ENCODE measurements at regions of chr2 and their contacts with region 1.

Region 1: DNA sequence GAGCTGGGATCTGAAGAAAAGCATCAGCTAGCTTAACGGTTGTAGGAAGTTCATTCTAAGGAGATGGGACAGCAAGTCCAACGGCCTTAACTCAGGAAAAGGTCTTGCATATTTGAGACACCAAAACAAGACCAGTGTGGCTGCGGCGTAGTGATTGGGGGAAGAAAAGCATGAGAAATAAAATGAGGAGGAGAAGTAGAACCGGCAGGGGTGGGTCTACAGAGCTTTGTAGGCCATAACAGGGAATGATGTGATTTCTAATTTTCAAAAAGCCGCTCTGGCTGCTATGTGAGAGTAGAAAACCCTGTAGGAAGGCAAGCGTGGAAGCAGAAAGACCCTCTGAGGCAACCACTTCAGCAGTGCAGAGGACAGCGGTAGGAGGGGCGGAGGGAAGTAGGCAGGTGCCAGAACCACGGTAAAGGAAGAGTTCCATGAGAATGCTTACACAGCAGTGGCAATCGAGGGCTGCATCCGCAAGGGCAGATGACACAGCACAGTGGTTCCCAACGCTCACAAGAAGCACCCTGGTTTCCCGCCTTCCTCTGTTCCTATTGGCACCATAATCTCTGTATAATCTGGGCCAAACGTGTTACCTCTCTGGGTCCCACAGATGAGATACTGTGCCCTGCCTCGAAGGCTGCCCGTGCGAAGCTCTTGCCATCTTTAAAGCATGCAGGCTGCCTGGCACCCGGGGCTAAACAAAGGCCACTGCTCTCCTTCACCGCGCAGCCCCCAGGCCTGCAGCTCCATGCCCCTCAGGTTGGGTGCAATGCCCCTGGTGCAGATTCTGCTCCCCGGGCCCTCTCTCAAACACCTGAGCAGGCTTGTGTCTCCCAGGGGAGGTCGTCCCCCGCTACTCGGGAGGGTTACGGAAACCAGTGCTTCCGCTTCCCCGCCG is 791 bp downstream of the ANKRD39 start:
- DNase-seq: no peak
- H3K4me3 ChIP-seq: peak overlapping the region; percentile 80
- CTCF ChIP-seq: no peak

Region 2: DNA sequence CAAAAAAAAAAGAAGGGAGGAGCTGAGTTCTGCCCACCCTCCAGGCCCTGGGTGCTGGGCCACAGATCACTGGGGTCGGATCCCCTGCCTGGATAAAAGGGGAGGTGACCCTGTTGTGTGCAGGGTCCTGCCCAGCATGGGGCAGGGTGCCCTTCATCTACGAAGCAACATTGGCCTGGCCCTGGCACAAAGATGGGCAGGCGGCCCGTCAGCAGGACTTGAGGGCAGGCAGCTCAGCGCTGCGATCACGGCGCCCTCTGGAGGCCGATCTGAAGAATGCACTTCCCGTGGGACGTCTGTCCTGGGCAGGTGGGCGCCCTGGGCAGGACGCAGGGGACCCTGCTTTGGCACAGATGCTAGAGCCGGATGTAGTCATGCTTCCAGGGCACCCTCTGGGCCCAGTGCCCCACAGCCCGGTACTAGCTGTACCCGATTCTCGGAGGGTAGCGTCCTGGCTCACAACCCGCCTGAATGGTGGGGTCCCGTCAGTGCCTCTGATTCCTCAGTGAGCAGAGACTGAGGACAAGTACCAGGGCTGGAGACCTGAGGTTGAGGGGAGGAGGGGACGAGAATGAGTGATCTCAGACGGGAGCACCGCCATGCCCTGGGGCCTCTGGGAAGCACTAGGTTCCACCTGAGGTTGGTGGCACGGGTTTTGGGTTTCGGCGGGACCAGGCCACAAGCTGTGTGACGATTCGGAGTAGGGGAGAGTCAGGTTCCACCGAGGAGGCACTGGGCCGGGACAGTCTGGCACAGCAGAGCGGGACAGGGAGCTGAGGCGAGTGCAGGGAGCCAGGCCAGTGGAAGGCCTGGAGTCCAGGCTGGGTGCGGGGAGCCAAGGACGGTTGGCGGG is 302.5 kb before region 1 on chr2:
- CTCF ChIA-PET with region 1: no interaction called
- POLR2A ChIA-PET with region 1: no interaction called
- DNase-seq: no peak
- H3K4me3 ChIP-seq: no peak overlapping the region
- CTCF ChIP-seq: peak; percentile 96

Region 3: GRCh38 chr2:96795076-96795475 is 61.9 kb before region 1 on chr2:
- CTCF ChIA-PET with region 1: no interaction called
- POLR2A ChIA-PET with region 1: no interaction called
- DNase-seq: no peak
- H3K4me3 ChIP-seq: no peak overlapping the region
- CTCF ChIP-seq: no peak

Region 4: GRCh38 chr2:96868555-96869280 is 11.7 kb after region 1 on chr2:
- CTCF ChIA-PET with region 1: interaction called, 50 read pairs
- POLR2A ChIA-PET with region 1: interaction called, 22 read pairs
- DNase-seq: peak; percentile 51
- H3K4me3 ChIP-seq: peak overlapping the region; percentile 87
- CTCF ChIP-seq: peak; percentile 58

Region 5: DNA sequence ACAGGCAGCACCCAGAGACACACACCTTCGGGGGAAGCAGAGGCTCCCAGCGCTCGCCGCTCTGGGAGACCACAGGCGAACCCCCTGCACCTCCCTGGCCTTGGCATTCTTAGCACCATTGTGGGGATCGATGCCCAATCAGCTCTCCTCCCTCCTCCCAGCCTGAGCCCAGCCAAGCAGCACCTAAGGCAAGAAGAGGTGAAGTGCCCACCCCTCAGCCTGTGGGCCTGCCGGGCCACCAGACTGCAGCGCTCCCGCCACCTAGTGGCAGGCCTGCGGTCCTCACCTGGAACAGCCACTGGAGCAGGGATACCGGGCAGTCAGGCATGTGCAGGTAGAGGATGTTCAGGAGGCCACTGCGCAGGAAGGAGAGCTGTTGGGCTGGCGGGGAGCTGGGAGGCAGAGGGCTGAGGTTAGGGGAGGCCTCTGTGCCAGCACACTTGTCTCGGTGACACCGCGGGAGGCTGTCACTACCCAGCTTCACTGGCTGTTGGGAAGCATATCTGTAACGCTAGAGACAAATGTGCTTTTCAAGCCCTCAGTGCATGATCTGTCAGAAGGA is 94.1 kb after region 1 on chr2:
- CTCF ChIA-PET with region 1: interaction called, 153 read pairs
- POLR2A ChIA-PET with region 1: no interaction called
- DNase-seq: no peak
- H3K4me3 ChIP-seq: no peak overlapping the region
- CTCF ChIP-seq: peak; percentile 93

Region 6: DNA sequence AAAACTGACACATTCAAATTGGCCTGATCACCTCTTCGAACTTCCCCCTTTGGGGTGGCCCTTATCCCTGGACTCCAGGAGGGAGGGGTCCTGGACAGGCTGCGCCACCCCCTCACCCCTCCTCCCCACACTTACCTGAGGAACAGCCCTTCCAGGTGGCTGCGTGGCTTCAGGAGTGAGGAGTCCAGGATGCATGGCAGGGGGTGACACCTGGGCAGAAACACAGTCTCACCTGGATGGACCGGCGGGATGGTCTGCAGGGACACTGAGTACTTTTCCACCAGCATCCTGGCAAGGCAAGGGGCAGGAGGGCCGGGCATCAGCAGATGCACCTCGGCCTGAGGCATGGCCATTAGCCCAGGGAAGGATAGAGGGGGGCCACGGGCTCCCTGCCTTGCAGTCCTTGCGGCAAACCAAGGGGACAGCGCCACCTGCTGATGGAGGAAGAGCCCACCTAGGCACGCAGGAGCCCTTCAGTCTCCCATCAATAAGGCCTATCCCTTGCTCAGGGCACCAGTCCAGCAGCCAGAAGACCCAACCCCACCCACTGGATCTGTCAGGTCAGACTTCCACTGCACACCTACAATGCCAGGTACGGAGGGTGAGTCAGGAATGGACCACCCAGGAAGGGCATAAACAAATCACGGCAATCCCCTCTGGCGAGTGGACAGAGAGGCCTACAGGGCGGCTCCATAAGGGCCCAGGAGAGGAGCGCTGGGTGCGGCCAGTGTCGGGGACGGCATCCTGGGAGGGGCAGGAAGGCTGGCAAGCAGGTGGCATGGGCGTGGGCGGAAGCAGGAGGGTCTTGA is 103.3 kb after region 1 on chr2:
- CTCF ChIA-PET with region 1: interaction called, 153 read pairs
- POLR2A ChIA-PET with region 1: no interaction called
- DNase-seq: no peak
- H3K4me3 ChIP-seq: no peak overlapping the region
- CTCF ChIP-seq: peak; percentile 96